ENCODE measurements at regions of chr1 and their contacts with region 1.

Region 1: DNA sequence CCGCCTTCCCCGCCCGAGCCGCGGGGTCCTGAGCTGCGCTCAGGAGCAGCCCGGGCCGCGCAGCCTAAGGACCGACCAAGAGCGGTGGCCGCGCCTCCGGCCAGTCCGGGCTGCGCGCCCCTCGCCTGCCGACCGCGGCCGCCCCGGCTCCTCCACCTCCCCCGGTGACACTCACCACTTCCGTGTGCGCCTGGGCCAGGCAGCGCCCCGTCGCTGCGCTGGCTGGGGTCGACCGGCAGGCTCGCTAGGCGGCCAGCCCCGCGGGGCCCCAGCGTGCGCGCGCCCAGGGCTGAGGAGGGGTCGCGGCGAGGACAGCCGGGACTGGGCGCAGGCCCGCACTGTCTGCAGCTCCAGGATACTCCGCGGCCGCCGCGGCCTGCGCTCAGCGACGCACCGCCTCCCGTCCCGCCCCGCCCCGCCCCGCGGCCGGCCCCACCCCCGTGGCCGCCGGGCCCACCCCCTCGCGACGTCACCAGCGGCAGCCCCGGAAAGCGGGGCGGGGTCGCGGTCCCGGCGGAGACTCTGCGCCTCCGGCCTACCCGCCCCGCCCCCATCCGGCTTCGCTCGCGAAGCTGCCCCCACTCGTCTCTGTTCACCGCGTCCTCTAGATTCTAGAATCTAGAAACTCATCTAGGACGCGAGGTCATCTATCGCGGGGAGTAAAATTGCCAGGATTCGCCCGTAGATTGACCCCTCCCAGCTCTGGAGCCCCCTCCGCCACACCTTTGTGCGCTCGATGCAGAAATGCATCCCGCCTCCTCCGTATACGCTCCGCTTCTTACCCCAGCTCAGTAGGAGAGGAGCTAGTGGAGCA is at the start of gene JAK1:
- DNase-seq: peak; percentile 81
- H3K4me3 Mint-ChIP-seq: peak within 1 kb of the TSS; percentile 89
- H3K27ac Mint-ChIP-seq: peak within 1 kb of the TSS; percentile 80
- H3K4me1 Mint-ChIP-seq: peaks cover 50% of the 10 kb centered on the region
- H3K27me3 Mint-ChIP-seq: no peaks in the 10 kb centered on the region
- total RNA-seq, gene JAK1: 99.9 and 105 TPM in 2 replicates

Region 2: DNA sequence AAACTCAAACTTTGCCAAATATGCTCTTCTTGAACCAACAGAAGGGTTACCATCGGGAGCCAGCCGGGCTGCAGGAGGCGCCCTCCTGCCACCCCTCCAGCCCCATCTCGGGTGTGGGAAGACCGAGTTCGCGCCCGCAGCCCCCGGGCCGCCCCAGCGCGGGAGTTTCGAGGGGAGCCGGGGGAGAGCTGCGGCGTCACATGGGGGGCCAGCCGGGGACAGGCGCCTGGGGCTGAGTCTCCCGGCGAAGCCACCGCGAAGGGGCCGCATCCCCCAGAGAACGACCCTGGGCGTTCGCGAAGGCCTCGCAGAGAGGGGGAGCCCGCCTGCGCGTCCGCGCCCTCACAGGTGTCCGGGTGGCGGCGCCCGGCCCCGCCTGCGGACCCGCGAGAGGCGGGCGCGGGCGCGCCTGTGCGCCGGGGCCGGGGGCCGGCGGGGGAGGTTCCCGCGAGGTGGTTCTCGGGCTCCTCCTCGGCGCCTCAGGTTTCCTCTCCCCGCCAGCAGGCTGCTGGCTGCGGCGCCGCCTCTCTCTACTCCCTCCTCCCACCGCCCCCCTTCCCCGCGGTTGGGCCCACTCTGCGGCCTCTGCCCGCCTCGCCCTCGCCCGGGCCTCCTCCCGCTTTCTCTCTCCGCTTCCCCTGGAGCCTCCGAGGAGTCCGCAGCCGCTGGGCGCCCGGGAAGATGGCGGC is 221.7 kb before region 1 on chr1 and contains the start of gene RAVER2:
- intact Hi-C with region 1: no loop called
- DNase-seq: peak; percentile 20
- H3K4me3 Mint-ChIP-seq: peak within 1 kb of the TSS; percentile 78
- H3K27ac Mint-ChIP-seq: no peak within 1 kb of the TSS
- H3K4me1 Mint-ChIP-seq: peaks cover 7% of the 10 kb centered on the region
- H3K27me3 Mint-ChIP-seq: peaks cover 38% of the 10 kb centered on the region
- total RNA-seq, gene RAVER2: 0.55 and 0.83 TPM in 2 replicates

Region 3: GRCh38 chr1:64877151-64877550 is 89.2 kb before region 1 on chr1:
- intact Hi-C with region 1: loop called (anchors 5 kb)
- DNase-seq: no peak
- H3K4me3 Mint-ChIP-seq: no peak overlapping the region
- H3K27ac Mint-ChIP-seq: no peak overlapping the region
- H3K4me1 Mint-ChIP-seq: peaks cover 31% of the 10 kb centered on the region
- H3K27me3 Mint-ChIP-seq: no peaks in the 10 kb centered on the region

Region 4: DNA sequence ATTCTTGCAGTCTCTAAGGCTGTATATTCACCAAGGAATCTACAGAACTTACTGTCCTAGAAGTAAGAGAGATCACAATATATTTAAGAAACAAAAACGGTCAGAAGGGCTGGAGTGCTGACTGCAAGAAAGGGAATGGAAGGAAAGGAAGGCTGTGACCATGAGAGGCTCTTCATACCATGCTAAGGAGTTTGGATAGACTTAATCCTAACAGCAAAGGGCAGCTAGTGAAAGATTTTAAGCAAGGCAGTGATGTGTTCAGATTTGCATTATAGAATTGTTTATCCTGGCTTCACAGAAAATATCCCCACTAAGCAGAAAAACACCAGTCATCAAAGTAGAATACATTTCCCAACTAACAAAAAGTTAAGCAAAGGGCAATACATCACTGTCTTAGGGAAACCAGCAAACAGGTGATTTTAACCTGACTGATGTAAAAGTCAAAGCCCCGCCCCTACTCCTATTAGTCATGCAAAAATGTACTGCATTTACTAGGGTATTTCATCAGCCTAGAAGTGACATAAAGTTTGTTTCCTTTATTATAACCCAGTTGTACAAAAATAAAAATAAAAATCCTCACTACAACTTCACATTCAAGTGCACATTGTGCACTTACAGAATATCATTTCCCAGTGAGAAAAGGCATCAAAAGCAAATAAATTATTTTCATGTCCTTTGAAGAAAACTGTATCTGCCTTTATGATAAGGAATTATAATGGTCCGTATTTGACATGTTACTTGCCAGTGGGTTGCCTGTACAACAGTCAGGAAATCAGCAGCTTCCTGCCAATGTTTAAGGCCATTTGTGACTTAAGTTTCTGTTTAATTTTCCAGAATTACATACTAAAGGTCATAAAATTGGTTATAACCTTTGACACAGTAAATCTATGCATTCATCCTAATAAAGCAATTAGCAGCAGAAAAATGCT is 17.2 kb before region 1 on chr1:
- intact Hi-C with region 1: loop called (anchors 2 kb)
- DNase-seq: no peak
- H3K4me3 Mint-ChIP-seq: no peak overlapping the region
- H3K27ac Mint-ChIP-seq: peak overlapping the region; percentile 45
- H3K4me1 Mint-ChIP-seq: peaks cover 52% of the 10 kb centered on the region
- H3K27me3 Mint-ChIP-seq: no peaks in the 10 kb centered on the region

Region 5: GRCh38 chr1:65002508-65003315 is 36.3 kb after region 1 on chr1:
- intact Hi-C with region 1: loop called (anchors 2 kb)
- DNase-seq: peak; percentile 50
- H3K4me3 Mint-ChIP-seq: peak overlapping the region; percentile 67
- H3K27ac Mint-ChIP-seq: no peak overlapping the region
- H3K4me1 Mint-ChIP-seq: peaks cover 34% of the 10 kb centered on the region
- H3K27me3 Mint-ChIP-seq: peaks cover 32% of the 10 kb centered on the region

Region 6: GRCh38 chr1:65067491-65068201 is 101.3 kb after region 1 on chr1:
- intact Hi-C with region 1: loop called (anchors 2 kb)
- DNase-seq: peak; percentile 38
- H3K4me3 Mint-ChIP-seq: peak overlapping the region; percentile 89
- H3K27ac Mint-ChIP-seq: peak overlapping the region; percentile 97
- H3K4me1 Mint-ChIP-seq: peaks cover 31% of the 10 kb centered on the region
- H3K27me3 Mint-ChIP-seq: peaks cover 2% of the 10 kb centered on the region

Region 7: GRCh38 chr1:65148548-65149350 is 182.4 kb after region 1 on chr1:
- intact Hi-C with region 1: loop called (anchors 10 kb)
- DNase-seq: peak; percentile 43
- H3K4me3 Mint-ChIP-seq: peak overlapping the region; percentile 90
- H3K27ac Mint-ChIP-seq: peak overlapping the region; percentile 88
- H3K4me1 Mint-ChIP-seq: peaks cover 40% of the 10 kb centered on the region
- H3K27me3 Mint-ChIP-seq: peaks cover 14% of the 10 kb centered on the region

Region 8: DNA sequence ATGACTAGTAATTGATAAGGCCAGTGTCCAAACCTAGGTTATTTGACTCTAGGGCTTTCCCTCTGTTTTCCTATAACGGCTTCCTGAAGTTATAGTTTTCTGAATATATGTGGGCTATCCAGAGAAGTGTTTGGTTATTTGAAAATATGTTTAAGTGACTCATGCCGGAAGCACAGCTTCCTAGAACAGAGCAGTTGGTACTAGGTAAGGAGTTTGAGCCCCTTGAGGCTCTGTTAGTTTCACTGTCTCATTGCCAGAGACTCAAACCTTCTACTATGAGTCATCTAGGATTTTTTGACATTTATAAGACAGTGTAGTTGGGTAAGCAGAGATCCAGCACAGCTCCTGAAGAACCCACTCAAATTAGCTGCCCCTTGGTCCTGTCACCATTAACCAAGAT is 427.0 kb after region 1 on chr1:
- intact Hi-C with region 1: loop called (anchors 10 kb)
- DNase-seq: peak; percentile 13
- H3K4me3 Mint-ChIP-seq: no peak overlapping the region
- H3K27ac Mint-ChIP-seq: peak overlapping the region; percentile 62
- H3K4me1 Mint-ChIP-seq: peaks cover 80% of the 10 kb centered on the region
- H3K27me3 Mint-ChIP-seq: no peaks in the 10 kb centered on the region

Measured in activated T-helper 2 cell treated with anti-CD3 and anti-CD28 coated beads, Interferon-gamma antibody, Interleukin-2, Interleukin-4, amounts not matched to agents 10 μg/mL and 5 μg/mL and 100 μg/mL, durations not matched to agents 14 hours and 24 hours and 36 hours (primary cell).